ENCODE measurements at regions of chr7 and their contacts with region 1.

Region 1: DNA sequence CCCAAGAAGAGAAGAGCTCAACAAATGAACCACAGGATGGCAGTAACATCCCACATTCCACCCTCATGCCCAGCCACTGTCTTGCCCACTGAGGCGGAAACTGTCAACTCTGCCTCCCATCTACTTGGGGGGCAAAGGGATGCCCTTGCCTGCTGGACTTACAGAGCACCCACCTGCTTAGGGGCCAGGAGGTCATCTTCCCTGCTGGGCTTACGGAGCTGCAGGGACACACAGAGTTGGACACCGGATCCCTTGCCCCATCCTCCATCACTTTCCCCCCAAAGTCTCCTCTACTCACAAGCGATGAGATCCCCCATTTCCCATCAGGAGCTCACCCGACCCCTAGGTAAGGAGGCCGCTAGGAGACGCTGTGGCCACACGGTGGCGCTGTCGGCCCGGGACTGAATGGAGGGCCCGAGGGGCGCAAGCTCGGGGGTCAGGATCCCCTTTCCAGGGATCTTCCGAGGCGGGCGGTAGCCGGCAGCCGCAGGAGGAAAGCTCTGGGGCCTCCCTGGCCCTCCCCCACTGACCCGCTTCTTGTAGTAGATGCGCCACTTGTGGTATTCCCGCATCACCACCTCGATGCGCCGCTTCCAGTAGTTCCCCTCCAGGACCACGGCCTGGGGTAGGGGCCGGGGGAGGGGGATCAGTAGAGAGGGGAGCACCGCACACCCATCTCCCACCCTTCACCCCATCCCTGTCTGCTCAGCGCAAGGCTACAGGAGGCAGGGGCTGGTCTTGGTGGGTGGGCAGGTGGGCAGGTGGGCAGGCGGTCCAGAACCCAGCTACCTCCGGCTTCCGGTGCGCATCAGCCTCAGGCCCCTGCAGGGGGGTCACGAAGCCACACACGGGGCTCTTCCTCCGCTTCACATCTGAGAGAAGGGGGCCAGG is 17.3 kb downstream of the MLXIPL start:
- DNase-seq: peak in 3 of 4 donors; percentile 47 to 62 (median 58)
- ATAC-seq: peak; percentile 49
- H3K4me3 ChIP-seq: no peak overlapping the region
- H3K27ac ChIP-seq: no peak overlapping the region
- H3K4me1 ChIP-seq: no peaks in the 10 kb centered on the region
- H3K27me3 ChIP-seq: no peaks in the 10 kb centered on the region
- CTCF ChIP-seq: peak; percentile 80 to 96 (median 89)
- POLR2A ChIP-seq: no peak

Region 2: DNA sequence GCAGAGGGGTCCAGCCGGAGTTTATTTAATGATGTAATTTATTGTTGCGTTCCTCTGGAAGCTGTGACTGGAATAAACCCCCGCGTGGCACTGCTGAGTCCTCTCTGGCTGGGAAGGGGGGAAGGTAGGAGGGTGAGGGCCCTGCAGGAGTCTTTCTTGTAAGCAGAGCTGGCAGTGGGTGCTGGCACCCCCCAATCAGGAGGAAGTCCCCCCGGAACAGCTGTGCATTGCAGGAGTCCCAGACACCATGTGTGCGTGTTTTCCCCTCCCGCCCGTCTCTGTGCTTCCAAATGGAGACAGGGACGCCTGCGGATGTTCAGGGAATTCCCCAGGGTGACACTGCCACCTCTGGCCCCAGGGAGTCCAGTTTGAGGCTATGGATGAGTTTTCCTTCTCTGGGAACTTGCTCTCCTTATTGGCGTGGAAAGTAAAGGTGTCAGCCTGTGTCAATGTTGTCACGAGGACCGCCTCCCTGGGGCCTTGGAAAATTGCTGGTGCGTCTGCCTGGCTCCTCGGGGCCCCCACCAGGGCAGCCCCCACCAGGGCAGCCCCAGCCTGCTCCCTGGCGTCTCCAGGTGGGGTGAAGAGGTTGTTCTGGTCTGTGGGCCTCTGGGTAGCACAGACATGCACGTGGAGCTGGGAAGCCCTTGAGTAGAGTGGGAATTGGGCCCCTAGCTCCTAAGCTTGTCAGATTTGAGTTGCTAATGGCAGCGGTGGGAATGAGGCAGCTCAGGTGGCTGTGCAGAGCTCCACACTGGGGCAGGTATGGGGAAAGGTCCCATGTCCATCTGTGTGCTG is 170.8 kb before region 1 on chr7:
- intact Hi-C with region 1: no loop called
- DNase-seq: no peak
- ATAC-seq: no peak
- H3K4me3 ChIP-seq: no peak overlapping the region
- H3K27ac ChIP-seq: no peak overlapping the region
- H3K4me1 ChIP-seq: peaks cover 5% of the 10 kb centered on the region
- H3K27me3 ChIP-seq: no peaks in the 10 kb centered on the region
- CTCF ChIP-seq: no peak
- POLR2A ChIP-seq: no peak

Region 3: DNA sequence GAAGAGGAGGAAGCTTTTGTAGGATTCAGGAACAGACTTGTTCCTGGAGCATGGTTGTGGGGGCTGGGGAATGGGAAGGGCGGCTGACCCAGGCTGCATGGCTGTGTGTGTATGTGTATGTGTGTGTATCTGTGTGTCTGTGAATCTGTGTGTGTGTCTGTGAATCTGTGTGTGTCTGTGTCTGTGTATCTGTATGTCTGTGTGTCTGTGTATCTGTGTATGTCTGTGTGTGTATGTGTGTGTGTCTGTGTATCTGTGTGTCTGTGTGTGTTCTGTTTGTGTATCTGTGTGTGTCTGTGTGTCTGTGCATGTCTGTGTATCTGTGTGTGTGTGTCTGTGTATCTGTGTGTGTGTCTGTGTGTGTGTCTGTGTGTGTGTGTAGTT is 119.0 kb after region 1 on chr7:
- intact Hi-C with region 1: loop called (anchors 5 kb)
- DNase-seq: no peak
- ATAC-seq: peak; percentile 3
- H3K4me3 ChIP-seq: no peak overlapping the region
- H3K27ac ChIP-seq: no peak overlapping the region
- H3K4me1 ChIP-seq: peaks cover 11% of the 10 kb centered on the region
- H3K27me3 ChIP-seq: no peaks in the 10 kb centered on the region
- CTCF ChIP-seq: no peak
- POLR2A ChIP-seq: no peak

Region 4: DNA sequence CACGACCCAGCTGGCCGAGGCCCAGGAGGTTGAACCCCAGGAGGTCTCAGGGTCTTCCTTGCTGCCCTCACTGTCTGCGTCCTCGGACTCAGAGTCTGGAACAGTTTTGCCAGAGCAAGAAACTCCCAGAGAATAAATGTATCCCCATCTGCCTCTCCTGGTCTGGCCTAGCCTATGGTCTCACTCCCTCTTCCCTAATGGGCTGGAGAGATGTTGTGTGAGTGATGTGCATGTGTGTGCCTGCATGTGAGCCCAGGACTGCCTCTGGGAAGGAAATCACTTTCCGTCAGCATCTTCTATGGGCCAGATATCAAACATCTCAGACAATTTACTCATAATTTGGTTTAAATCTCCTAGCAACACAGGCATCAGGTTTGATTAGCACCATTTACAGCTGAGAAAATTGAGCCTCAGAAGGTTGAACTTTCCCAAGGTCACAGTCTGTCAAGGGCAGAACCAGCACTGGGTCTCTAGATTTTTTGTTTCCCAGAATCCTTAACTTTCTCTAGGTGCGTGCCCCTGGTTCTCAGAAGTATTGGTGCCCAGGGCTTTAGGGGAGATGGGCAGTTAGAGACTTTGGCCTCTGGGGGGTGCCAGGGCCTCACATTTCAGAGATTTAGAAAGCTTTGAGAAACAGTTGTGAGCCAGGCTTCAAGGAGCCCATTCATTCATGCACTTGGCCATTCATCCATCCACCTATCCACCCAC is 258.8 kb after region 1 on chr7:
- intact Hi-C with region 1: loop called (anchors 10 kb)
- DNase-seq: peak; percentile 47 to 68 (median 53)
- ATAC-seq: peak; percentile 72
- H3K4me3 ChIP-seq: no peak overlapping the region
- H3K27ac ChIP-seq: no peak overlapping the region
- H3K4me1 ChIP-seq: peaks cover 8% of the 10 kb centered on the region
- H3K27me3 ChIP-seq: no peaks in the 10 kb centered on the region
- CTCF ChIP-seq: peak in 6 of 7 experiments; percentile 46 to 72 (median 60)
- POLR2A ChIP-seq: no peak

Region 5: GRCh38 chr7:74217455-74218342 is 610.7 kb after region 1 on chr7:
- intact Hi-C with region 1: no loop called
- DNase-seq: no peak
- ATAC-seq: no peak
- H3K4me3 ChIP-seq: no peak overlapping the region
- H3K27ac ChIP-seq: peak overlapping the region in 1 of 4 donors; percentile 25
- H3K4me1 ChIP-seq: no peaks in the 10 kb centered on the region
- H3K27me3 ChIP-seq: no peaks in the 10 kb centered on the region
- CTCF ChIP-seq: no peak
- POLR2A ChIP-seq: no peak

Measured in body of pancreas (tissue), 4 donors.